ENCODE measurements at regions of chr4 and their contacts with region 1.

Region 1: GRCh38 chr4:56821381-56822243 is at the start of gene SPINK2:
- DNase-seq: peak; percentile 88
- H3K4me3 ChIP-seq: peak within 1 kb of the TSS; percentile 12 to 45
- H3K27ac ChIP-seq: no peak within 1 kb of the TSS
- H3K4me1 ChIP-seq: peaks cover 0 to 2% of the 10 kb centered on the region in 2 experiments; a peak in 1 of 4 replicates
- H3K27me3 ChIP-seq: peaks cover 19% of the 10 kb centered on the region; the same call in 1 of the 2 replicates
- CTCF ChIP-seq: no peak
- EP300 ChIP-seq: no peak
- RAD21 ChIP-seq: no peak
- polyA plus RNA-seq, gene SPINK2: not detected in 2 replicates

Region 2: GRCh38 chr4:56843421-56843899 is 21.8 kb after region 1 on chr4:
- CTCF ChIA-PET with region 1: interaction called, 21 read pairs
- POLR2A ChIA-PET with region 1: no interaction called
- DNase-seq: no peak
- H3K4me3 ChIP-seq: no peak overlapping the region
- H3K27ac ChIP-seq: no peak overlapping the region
- H3K4me1 ChIP-seq: no peaks in the 10 kb centered on the region
- H3K27me3 ChIP-seq: no peaks in the 10 kb centered on the region
- CTCF ChIP-seq: no peak
- EP300 ChIP-seq: no peak
- RAD21 ChIP-seq: no peak